Naive thymus-derived CD4-positive, alpha-beta T cell (primary cell): ENCODE measurements at regions of chr21 and their contacts with region 1.

Region 1: GRCh38 chr21:31731802-31732596 is at the start of gene SCAF4:
- DNase-seq: peak; percentile 64 to 86 (median 72)
- ATAC-seq: peak; percentile 95
- H3K4me3 ChIP-seq: peak within 1 kb of the TSS; percentile 80
- H3K4me3 Mint-ChIP-seq: peak within 1 kb of the TSS in 6 of 10 donors; percentile 67 to 94 (median 90)
- H3K27ac ChIP-seq: peak within 1 kb of the TSS; percentile 95
- H3K27ac Mint-ChIP-seq: peak within 1 kb of the TSS; percentile 32 to 96 (median 83)
- H3K4me1 ChIP-seq: peaks cover 24 to 39% of the 10 kb centered on the region in 2 donors
- H3K4me1 Mint-ChIP-seq: peaks cover 13 to 19% (median 15%) of the 10 kb centered on the region in 7 donors
- H3K27me3 ChIP-seq: no peaks in the 10 kb centered on the region
- H3K27me3 Mint-ChIP-seq: peaks cover 0 to 2% (median 0%) of the 10 kb centered on the region in 5 donors
- total RNA-seq, gene SCAF4: 54.8 to 69.7 (median 64.7) TPM

Region 2: DNA sequence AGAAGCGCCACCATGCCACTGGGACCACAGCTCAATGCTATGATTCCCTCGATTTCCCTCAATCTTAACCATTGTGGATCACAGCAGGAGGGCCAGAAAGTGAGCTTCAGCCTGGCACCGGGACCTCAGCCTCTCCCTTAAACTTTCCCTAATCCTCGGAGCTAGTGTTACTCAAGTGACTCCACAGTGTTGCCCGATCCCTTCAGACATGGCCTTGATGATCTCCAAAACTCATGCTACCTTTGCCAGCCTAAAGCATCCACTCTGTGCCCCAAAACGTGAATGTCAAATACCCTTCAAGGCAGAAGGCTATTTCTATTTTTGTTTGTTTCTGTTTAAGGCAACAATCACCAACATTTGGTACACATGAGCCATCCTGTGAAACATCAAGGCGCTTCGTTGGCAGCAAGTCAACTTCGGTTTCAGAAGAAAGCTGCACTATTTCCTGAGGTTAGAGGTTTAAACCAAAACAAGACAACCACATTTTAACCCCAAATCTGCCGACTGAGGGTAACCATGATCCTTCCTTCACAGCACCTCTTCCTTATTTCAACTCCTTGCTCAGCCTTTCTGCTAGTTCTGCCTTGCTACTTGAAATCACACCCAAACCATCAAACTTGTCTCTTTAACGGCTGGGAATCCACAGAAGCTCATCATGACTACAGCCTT is 599.3 kb before region 1 on chr21:
- CTCF ChIA-PET with region 1: no interaction called
- POLR2A ChIA-PET with region 1: no interaction called
- intact Hi-C with region 1: loop called (anchors 1 to 5 kb)
- DNase-seq: peak in 8 of 9 donors; percentile 58 to 94 (median 92)
- ATAC-seq: peak; percentile 96
- H3K4me3 ChIP-seq: peak overlapping the region; percentile 59
- H3K4me3 Mint-ChIP-seq: peak overlapping the region; percentile 83 to 91 (median 86)
- H3K27ac ChIP-seq: no peak overlapping the region
- H3K27ac Mint-ChIP-seq: peak overlapping the region; percentile 84 to 96 (median 94)
- H3K4me1 ChIP-seq: peaks cover 25 to 50% of the 10 kb centered on the region in 2 donors
- H3K4me1 Mint-ChIP-seq: peaks cover 41 to 75% (median 69%) of the 10 kb centered on the region in 7 donors
- H3K27me3 ChIP-seq: no peaks in the 10 kb centered on the region
- H3K27me3 Mint-ChIP-seq: no peaks in the 10 kb centered on the region

Region 3: GRCh38 chr21:31668651-31669491 is 63.1 kb before region 1 on chr21:
- CTCF ChIA-PET with region 1: no interaction called
- POLR2A ChIA-PET with region 1: no interaction called
- intact Hi-C with region 1: no loop called
- DNase-seq: no peak
- ATAC-seq: no peak
- H3K4me3 ChIP-seq: no peak overlapping the region
- H3K4me3 Mint-ChIP-seq: no peak overlapping the region
- H3K27ac ChIP-seq: no peak overlapping the region
- H3K27ac Mint-ChIP-seq: peak overlapping the region in 7 of 9 donors; percentile 9 to 77 (median 43)
- H3K4me1 ChIP-seq: peaks cover 7 to 18% of the 10 kb centered on the region in 2 donors
- H3K4me1 Mint-ChIP-seq: peaks cover 28 to 52% (median 45%) of the 10 kb centered on the region in 7 donors
- H3K27me3 ChIP-seq: no peaks in the 10 kb centered on the region
- H3K27me3 Mint-ChIP-seq: no peaks in the 10 kb centered on the region

Region 4: DNA sequence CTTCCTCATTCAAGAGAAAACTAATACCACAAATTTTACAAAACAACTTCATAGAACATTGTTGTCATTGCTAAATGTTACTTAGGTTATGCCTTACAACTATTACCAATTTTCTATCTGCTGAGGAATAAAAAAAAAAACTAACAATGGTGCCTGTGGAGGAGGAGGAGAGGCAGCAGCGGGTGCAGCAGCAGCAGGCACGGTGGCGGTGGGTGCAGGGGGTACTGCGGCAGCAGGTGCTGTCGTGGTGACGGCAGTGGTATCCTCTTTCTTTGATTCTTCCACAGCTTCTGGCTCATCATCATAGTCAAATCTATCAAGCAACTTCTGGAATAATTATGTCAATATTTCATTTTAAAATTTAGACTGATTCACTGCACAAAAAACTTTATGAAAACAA is 35.6 kb before region 1 on chr21:
- CTCF ChIA-PET with region 1: interaction called, 3 read pairs
- POLR2A ChIA-PET with region 1: no interaction called
- intact Hi-C with region 1: loop called (anchors 5 kb)
- DNase-seq: no peak
- ATAC-seq: no peak
- H3K4me3 ChIP-seq: no peak overlapping the region
- H3K4me3 Mint-ChIP-seq: no peak overlapping the region
- H3K27ac ChIP-seq: no peak overlapping the region
- H3K27ac Mint-ChIP-seq: peak overlapping the region in 8 of 9 donors; percentile 5 to 69 (median 44)
- H3K4me1 ChIP-seq: no peaks in the 10 kb centered on the region
- H3K4me1 Mint-ChIP-seq: peaks cover 2 to 13% (median 5%) of the 10 kb centered on the region in 7 donors
- H3K27me3 ChIP-seq: no peaks in the 10 kb centered on the region
- H3K27me3 Mint-ChIP-seq: no peaks in the 10 kb centered on the region

Region 5: DNA sequence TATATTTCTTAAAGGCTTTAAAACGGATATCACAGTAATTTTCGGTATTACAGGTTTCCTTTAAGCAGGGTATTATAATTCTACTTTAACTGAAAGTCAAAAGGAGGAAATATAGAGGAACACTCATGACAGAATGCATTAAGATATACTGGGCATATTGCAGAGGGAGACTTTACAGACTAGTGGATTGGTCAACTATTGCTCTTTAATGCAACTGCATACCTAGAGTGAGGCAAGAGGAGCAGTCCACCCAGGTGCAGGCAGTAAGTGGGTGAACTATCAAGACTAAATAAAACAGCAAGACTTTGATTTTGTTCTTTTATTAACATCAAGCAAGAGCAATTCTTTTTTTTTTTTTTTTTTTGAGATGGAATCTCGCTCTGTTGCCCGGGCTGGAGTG is 10.6 kb before region 1 on chr21:
- CTCF ChIA-PET with region 1: no interaction called
- POLR2A ChIA-PET with region 1: interaction called, 3 read pairs
- intact Hi-C with region 1: loop called in 1 of 2 experiments (anchors 1 kb)
- DNase-seq: no peak
- ATAC-seq: no peak
- H3K4me3 ChIP-seq: no peak overlapping the region
- H3K4me3 Mint-ChIP-seq: peak overlapping the region in 7 of 10 donors; percentile 25 to 70 (median 55)
- H3K27ac ChIP-seq: no peak overlapping the region
- H3K27ac Mint-ChIP-seq: peak overlapping the region in 3 of 9 donors; percentile 28 to 79 (median 56)
- H3K4me1 ChIP-seq: peaks cover 27 to 38% of the 10 kb centered on the region in 2 donors
- H3K4me1 Mint-ChIP-seq: peaks cover 37 to 93% (median 75%) of the 10 kb centered on the region in 7 donors
- H3K27me3 ChIP-seq: no peaks in the 10 kb centered on the region
- H3K27me3 Mint-ChIP-seq: no peaks in the 10 kb centered on the region

Region 6: DNA sequence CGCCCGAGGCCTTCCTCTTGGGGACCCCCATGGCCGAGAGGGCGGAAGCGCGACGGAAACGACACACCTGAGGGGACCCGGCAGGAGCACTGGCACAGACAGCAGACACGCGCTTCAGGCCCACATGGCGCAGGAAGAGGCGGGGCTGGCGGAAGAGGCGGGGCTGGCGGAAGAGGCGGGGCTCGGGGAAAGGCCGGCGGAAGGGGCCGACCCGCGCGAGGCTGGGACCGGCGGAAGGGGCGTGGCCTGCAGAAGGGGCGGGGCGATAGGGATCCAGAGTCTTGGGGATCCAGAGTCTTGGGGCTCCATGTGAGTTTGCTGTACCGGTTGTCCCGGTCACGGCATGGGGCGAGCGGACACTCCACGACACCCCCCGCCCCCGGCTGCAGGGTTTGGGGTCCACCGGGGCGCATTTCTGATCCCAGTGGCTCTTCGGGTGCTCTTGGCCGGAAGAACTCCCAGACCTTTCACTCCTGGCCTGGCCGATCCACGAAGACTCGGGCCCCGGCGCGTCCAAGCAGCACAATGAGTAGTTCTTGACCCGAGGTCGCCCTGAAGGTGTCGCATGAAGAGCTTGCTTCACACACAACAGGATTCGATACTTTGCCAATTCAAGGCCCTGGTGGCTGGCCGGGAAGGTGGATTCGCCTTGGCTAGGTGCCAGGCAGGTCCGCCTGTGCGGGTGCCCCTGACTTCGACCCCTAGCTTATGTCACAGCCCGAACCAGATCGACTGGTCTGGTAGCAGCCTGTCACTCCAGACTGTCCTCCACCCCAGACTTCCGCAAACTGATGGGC is 661.1 kb after region 1 on chr21 and contains the start of gene URB1:
- CTCF ChIA-PET with region 1: no interaction called
- POLR2A ChIA-PET with region 1: no interaction called
- intact Hi-C with region 1: loop called (anchors 1 to 2 kb)
- DNase-seq: peak; percentile 88 to 99 (median 94)
- ATAC-seq: peak; percentile 99
- H3K4me3 ChIP-seq: peak within 1 kb of the TSS; percentile 85
- H3K4me3 Mint-ChIP-seq: peak within 1 kb of the TSS; percentile 81 to 92 (median 86)
- H3K27ac ChIP-seq: peak within 1 kb of the TSS; percentile 70
- H3K27ac Mint-ChIP-seq: peak within 1 kb of the TSS; percentile 46 to 90 (median 71)
- H3K4me1 ChIP-seq: peaks cover 8 to 12% of the 10 kb centered on the region in 2 donors
- H3K4me1 Mint-ChIP-seq: peaks cover 34 to 52% (median 43%) of the 10 kb centered on the region in 7 donors
- H3K27me3 ChIP-seq: no peaks in the 10 kb centered on the region
- H3K27me3 Mint-ChIP-seq: peaks cover 2 to 20% (median 3%) of the 10 kb centered on the region in 5 donors
- total RNA-seq, gene URB1: 14.5 to 20.6 (median 17.9) TPM